Lower leg skin (tissue), 4 donors: ENCODE measurements at regions of chr4 and their contacts with region 1.

Region 1: GRCh38 chr4:1260418-1261106 is 11.6 kb upstream of the CTBP1 start:
- DNase-seq: peak in 1 of 2 donors; percentile 54
- H3K4me3 ChIP-seq: no peak overlapping the region
- CTCF ChIP-seq: no peak
- POLR2A ChIP-seq: no peak

Region 2: DNA sequence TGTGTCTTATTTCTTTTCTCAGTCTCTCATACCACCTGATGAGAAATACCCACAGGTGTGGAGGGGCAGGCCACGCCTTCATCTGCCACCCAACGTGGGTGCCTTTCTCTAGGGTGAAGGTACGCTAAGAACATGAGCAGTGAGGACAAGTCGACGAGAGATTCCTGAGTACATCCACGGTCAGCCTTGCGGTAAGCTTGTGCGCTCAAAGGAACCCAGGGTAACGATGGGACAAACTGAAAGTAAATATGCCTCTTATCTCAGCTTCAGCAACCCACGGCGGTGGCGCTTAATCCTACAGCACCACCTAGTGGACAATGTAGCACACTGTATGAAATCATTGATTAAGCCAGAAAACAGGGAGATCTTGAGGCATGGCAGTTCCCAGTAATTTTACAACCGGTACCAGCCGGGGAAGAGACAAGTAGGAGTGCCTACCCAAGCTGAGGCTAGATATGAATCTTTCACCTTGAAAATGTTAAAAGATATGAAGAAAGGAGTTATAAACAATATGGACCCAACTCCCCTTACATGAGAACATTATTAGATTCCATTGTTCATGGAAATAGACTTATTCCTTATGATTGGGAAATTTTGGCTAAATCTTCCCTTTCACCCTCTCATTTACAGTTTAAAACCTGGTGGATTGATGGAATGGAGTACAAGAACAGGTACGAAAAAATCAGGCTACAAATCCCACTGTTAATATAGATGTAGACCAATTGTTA is 1018.3 kb before region 1 on chr4:
- intact Hi-C with region 1: no loop called
- DNase-seq: peak; percentile 30 to 90
- H3K4me3 ChIP-seq: no peak overlapping the region
- CTCF ChIP-seq: no peak
- POLR2A ChIP-seq: no peak

Region 3: DNA sequence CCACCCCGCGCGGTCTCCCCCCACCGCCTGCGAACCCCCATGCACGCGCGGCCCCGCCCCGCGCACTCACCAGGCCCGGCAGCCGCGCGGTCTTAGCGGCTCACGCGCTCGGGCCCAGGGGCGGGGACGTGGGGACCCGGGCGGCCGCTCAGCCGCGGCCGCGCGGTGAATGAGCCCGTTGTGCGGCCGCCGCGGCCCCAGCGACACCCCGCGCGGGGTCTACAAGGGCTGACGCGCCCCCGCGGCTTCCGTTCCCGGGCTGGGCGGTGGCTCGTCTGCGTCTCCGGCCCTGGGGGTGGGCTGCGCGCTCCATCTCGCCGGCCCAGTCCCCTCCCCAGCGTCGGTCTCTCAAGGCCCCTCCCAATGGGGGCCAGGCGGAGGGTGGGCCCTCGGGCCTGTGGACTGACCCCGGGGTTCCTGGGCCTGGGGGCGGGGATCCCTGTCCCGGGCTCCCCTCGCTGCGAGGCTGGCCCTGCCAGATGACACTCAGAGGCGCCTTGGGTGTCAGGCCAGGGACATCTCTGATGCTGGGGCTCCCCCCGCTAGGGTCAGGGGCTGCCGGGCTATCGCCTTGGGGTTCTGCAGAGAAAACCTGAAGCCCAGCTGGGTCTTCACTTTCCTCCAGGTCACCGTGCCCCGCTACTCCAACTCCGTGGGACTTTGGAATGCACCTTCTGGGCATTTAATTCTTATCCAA is 263.0 kb before region 1 on chr4:
- intact Hi-C with region 1: no loop called
- DNase-seq: no peak
- H3K4me3 ChIP-seq: no peak overlapping the region
- CTCF ChIP-seq: no peak
- POLR2A ChIP-seq: no peak

Region 4: GRCh38 chr4:1167247-1167949 is 93.2 kb before region 1 on chr4:
- intact Hi-C with region 1: loop called (anchors 10 kb)
- DNase-seq: peak in 1 of 2 donors; percentile 95
- H3K4me3 ChIP-seq: peak overlapping the region; percentile 20
- CTCF ChIP-seq: peak in 1 of 3 donors; percentile 89
- POLR2A ChIP-seq: no peak

Region 5: DNA sequence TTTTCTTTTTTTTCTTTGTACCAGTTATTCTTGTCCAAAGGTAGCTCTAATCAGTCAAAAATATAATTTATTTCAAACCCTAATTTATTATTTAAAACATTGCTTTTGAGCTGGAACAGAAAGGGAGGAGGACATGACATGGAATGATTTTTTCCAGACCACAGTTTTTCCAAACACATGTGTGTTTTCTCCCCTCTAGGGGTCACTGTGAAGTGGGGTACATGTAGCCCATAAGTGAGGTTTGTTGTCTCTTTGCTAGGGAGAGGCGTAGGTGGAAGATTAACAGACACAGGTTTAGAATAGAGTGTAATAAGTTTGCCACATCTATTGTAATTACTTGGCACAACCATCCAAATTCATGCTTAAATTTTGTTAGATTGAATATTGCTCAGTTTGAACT is 1412.6 kb after region 1 on chr4:
- intact Hi-C with region 1: loop called (anchors 5 kb)
- DNase-seq: no peak
- H3K4me3 ChIP-seq: no peak overlapping the region
- CTCF ChIP-seq: no peak
- POLR2A ChIP-seq: no peak